ENCODE measurements at regions of chr3 and their contacts with region 1.

Region 1: DNA sequence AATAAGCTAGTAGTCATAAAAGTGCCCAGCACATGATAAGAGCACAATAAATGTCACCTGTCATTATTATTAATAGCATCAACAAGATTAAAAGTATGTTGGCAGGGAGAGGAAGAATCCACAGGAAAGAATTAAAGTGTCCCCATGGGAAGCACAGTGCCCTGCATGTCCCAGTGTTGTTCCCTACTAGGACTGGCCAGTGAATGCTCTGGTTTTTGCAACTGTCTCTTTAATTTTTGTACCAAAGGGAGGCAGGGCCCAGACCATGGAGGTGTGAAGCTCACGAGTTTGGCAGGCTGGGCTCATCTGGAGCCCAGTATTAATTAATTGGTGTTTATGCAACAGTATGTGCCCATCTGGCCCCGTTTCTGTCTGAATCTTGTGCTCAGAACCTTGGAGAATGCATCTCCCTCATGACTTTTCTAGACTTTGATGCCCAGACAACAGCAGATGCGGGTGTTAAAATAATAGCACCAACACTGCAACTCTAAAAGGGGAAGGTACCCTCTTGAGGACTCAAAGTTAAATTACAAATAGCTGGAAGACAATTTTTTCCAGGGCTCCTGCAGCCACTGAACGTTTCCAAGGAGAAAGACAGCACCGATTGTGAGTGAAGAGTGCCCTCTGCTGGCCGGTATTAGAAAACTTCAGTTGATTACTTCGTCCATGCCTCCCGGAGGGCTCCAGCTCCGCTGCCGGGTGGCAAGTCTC is 71.9 kb upstream of the SPATA12 start:
- DNase-seq: peak; percentile 72 to 83 (median 81)
- ATAC-seq: peak; percentile 77 to 90 (median 86)
- H3K4me3 ChIP-seq: peak overlapping the region in 2 of 12 donors; percentile 7 to 25
- H3K27ac ChIP-seq: peak overlapping the region in 7 of 12 donors; percentile 2 to 46 (median 26)
- H3K4me1 ChIP-seq: peaks cover 0 to 33% (median 16%) of the 10 kb centered on the region in 12 donors
- H3K27me3 ChIP-seq: no peaks in the 10 kb centered on the region
- CTCF ChIP-seq: peak; percentile 70 to 92 (median 82)
- POLR2A ChIP-seq: no peak

Region 2: GRCh38 chr3:56443372-56443771 is 545.2 kb before region 1 on chr3:
- intact Hi-C with region 1: no loop called
- DNase-seq: no peak
- ATAC-seq: no peak
- H3K4me3 ChIP-seq: no peak overlapping the region
- H3K27ac ChIP-seq: no peak overlapping the region
- H3K4me1 ChIP-seq: no peaks in the 10 kb centered on the region
- H3K27me3 ChIP-seq: peaks cover 0 to 5% (median 0%) of the 10 kb centered on the region in 9 donors
- CTCF ChIP-seq: no peak
- POLR2A ChIP-seq: no peak

Region 3: DNA sequence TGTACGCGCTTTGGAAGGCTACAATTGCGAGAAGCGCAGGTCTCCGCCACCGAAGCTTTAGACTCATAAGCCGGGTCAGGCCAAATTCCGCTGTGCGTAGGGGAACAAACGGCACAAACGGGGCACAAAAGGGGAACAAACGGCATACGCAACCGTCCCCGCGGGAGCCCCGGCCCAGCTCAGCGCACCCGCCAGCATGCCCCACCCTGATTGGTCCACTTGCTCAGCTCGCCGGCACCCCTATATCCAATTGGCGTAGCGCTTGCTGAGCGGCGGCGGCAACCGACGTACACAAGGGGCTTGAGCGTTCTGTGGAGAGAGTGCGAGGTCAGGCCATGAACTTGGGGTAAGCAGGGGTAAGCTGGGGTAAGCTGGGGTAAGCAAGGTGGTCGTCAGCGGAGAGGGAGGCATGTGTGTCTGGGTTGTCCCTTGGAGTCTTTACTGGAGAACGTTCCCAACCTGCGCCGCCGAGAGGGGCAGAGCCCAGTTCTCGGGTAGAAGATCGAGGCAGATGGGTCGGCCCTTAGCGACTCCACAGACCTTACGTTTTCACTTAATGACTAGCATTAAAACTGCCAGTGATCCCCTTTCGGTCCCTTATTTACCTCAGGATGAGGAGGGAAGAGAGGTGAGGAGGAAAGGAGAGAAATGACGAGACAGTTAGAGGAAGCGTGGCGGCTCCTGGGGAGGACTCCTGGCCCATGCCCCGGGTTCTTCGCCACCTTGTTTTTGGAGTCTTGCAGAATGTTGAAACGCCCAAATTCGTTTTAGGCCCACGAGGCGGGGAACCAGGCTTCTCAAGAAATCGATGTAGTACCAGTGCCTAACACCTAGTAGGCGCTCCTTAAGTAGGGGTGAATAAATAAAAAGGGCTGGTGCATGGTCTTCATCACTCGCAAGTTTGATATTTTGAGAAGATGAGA is 431.4 kb before region 1 on chr3 and contains the start of gene CCDC66:
- intact Hi-C with region 1: loop called in 1 of 10 experiments (anchors 10 kb)
- DNase-seq: peak; percentile 96 to 98 (median 97)
- ATAC-seq: peak; percentile 100
- H3K4me3 ChIP-seq: peak within 1 kb of the TSS; percentile 28 to 95 (median 73)
- H3K27ac ChIP-seq: peak within 1 kb of the TSS; percentile 16 to 89 (median 80)
- H3K4me1 ChIP-seq: peaks cover 0 to 20% (median 11%) of the 10 kb centered on the region in 12 donors
- H3K27me3 ChIP-seq: no peaks in the 10 kb centered on the region
- CTCF ChIP-seq: peak; percentile 49 to 73 (median 60)
- POLR2A ChIP-seq: peak; percentile 78 to 94
- total RNA-seq, gene CCDC66: 7.9 to 15.9 (median 11.6) TPM

Region 4: GRCh38 chr3:56702490-56703315 is 285.9 kb before region 1 on chr3:
- intact Hi-C with region 1: loop called (anchors 1 to 2 kb)
- DNase-seq: peak in 2 of 5 donors; percentile 20 to 39
- ATAC-seq: peak; percentile 60 to 75 (median 64)
- H3K4me3 ChIP-seq: no peak overlapping the region
- H3K27ac ChIP-seq: no peak overlapping the region
- H3K4me1 ChIP-seq: peaks cover 0 to 7% (median 0%) of the 10 kb centered on the region in 12 donors
- H3K27me3 ChIP-seq: no peaks in the 10 kb centered on the region
- CTCF ChIP-seq: peak; percentile 81 to 97 (median 88)
- POLR2A ChIP-seq: no peak

Region 5: DNA sequence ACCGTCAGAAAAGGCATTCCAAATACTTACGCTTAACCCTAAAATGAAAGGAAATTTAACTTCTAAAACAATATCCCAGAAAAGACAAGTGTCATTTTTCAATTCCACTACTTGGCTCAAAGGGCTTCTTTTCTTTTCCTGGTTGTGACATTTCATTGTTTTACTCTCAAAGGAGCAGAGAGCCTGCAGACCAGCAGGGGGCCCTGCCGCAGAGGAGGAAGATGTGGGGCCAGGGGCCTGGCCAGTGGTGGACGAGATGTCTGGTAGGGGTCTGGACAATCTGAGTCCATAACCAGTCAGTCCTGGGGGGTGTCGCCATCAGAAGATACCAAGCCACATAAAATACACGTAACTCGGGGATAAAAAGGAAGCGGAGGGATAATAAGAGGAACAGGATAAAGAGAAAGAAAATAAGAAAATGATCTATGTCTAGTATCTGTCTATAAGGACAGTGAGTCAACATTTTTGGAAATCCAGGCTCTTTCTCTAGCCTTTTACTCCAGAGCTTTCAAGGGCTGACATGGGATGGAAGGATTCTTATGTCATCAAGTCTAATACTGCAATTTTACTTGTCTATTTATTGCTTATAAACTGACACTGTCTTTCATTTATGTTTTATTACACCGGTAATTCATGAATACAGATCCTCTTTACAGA is 132.6 kb before region 1 on chr3:
- intact Hi-C with region 1: loop called in 3 of 10 experiments (anchors 2 to 5 kb)
- DNase-seq: peak in 2 of 5 donors; percentile 15 to 30
- ATAC-seq: peak in 2 of 4 donors; percentile 49 to 50
- H3K4me3 ChIP-seq: no peak overlapping the region
- H3K27ac ChIP-seq: no peak overlapping the region
- H3K4me1 ChIP-seq: peaks cover 0 to 10% (median 0%) of the 10 kb centered on the region in 12 donors
- H3K27me3 ChIP-seq: no peaks in the 10 kb centered on the region
- CTCF ChIP-seq: peak; percentile 28 to 68 (median 52)
- POLR2A ChIP-seq: no peak

Region 6: GRCh38 chr3:56923521-56924224 is 64.9 kb before region 1 on chr3:
- intact Hi-C with region 1: loop called in 1 of 10 experiments (anchors 5 kb)
- DNase-seq: peak in 4 of 5 donors; percentile 49 to 71 (median 63)
- ATAC-seq: peak; percentile 67 to 88 (median 78)
- H3K4me3 ChIP-seq: no peak overlapping the region
- H3K27ac ChIP-seq: peak overlapping the region in 11 of 12 donors; percentile 13 to 79 (median 69)
- H3K4me1 ChIP-seq: peaks cover 2 to 81% (median 62%) of the 10 kb centered on the region in 12 donors
- H3K27me3 ChIP-seq: no peaks in the 10 kb centered on the region
- CTCF ChIP-seq: peak in 1 of 12 donors; percentile 6
- POLR2A ChIP-seq: no peak

Region 7: GRCh38 chr3:56930706-56931105 is 57.9 kb before region 1 on chr3:
- intact Hi-C with region 1: loop called in 1 of 10 experiments (anchors 5 kb)
- DNase-seq: no peak
- ATAC-seq: no peak
- H3K4me3 ChIP-seq: no peak overlapping the region
- H3K27ac ChIP-seq: peak overlapping the region in 1 of 12 donors; percentile 10
- H3K4me1 ChIP-seq: peaks cover 0 to 49% (median 34%) of the 10 kb centered on the region in 12 donors
- H3K27me3 ChIP-seq: no peaks in the 10 kb centered on the region
- CTCF ChIP-seq: no peak
- POLR2A ChIP-seq: no peak

Region 8: GRCh38 chr3:57078344-57078634 is 89.7 kb after region 1 on chr3:
- intact Hi-C with region 1: loop called in 1 of 10 experiments (anchors 2 kb)
- DNase-seq: peak; percentile 41 to 74 (median 46)
- ATAC-seq: peak; percentile 24 to 61 (median 57)
- H3K4me3 ChIP-seq: peak overlapping the region; percentile 36 to 93 (median 74)
- H3K27ac ChIP-seq: peak overlapping the region in 4 of 12 donors; percentile 30 to 79 (median 43)
- H3K4me1 ChIP-seq: peaks cover 0 to 18% (median 4%) of the 10 kb centered on the region in 12 donors
- H3K27me3 ChIP-seq: peaks cover 0 to 21% (median 0%) of the 10 kb centered on the region in 9 donors
- CTCF ChIP-seq: no peak
- POLR2A ChIP-seq: no peak

Measured in heart left ventricle (tissue), 16 donors.